Activated naive CD4-positive, alpha-beta T cell treated with anti-CD3 and anti-CD28 coated beads for 36 hours (primary cell): ENCODE measurements at regions of chr9 and their contacts with region 1.

Region 1: GRCh38 chr9:136482793-136483588 is at the start of gene SEC16A:
- DNase-seq: peak; percentile 100
- H3K4me3 Mint-ChIP-seq: peak within 1 kb of the TSS; percentile 99
- H3K27ac Mint-ChIP-seq: peak within 1 kb of the TSS; percentile 99
- H3K4me1 Mint-ChIP-seq: peaks cover 35% of the 10 kb centered on the region
- H3K27me3 Mint-ChIP-seq: no peaks in the 10 kb centered on the region
- total RNA-seq, gene SEC16A: 44.1 to 47.3 TPM

Region 2: GRCh38 chr9:135907431-135908092 is 575.4 kb before region 1 on chr9 and contains the start of gene CAMSAP1:
- CTCF ChIA-PET with region 1: no interaction called
- intact Hi-C with region 1: loop called (anchors 5 kb)
- DNase-seq: peak; percentile 94
- H3K4me3 Mint-ChIP-seq: peak within 1 kb of the TSS; percentile 80
- H3K27ac Mint-ChIP-seq: peak within 1 kb of the TSS; percentile 89
- H3K4me1 Mint-ChIP-seq: peaks cover 53% of the 10 kb centered on the region
- H3K27me3 Mint-ChIP-seq: no peaks in the 10 kb centered on the region
- total RNA-seq, gene CAMSAP1: 32.6 to 35.2 TPM

Region 3: DNA sequence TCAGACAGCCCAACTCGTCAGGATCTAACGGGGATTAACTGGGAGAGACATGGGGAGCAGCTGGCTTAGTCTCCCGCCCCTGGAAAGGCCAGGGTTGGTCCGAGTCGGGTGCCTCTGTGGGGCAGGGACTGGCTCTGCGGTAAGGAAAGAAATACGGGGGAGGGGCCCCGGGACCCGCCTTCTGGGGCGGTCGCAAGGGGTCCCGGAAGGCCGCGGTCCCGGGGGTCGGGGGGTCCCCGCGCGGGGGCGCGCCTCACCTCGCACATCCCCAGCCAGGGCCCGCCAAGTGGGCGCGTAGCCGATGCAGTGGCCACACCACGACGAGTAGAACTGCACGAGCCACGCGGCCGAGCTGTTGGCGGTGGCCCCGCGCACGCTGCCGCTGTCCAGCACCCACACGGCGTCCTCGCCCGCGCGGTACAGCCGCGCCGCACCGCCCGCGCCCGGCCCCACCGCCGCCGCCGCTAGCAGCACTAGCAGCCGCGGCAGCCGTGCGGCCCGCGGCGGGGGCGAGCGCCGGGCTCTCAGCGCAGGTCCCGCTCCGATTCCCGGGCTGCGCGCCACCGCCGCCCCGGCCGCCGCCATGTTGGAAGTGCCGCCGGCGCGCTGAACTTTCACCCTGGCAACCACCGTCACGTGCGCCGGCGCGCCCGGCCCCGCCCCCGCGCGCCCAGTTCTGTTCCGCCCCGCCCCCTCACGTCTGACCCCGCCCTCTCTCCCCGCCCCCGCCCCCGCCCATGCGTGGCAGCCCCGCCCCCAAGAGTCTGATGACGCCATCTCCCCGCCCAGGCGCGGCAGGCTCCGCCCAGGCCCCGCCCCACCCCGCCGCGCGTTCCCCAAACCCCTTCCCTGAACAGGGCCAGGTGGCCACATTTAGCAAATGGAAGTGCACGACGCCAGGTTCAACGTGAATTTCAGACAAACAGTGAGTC is 237.5 kb before region 1 on chr9 and contains the start of gene QSOX2:
- CTCF ChIA-PET with region 1: no interaction called
- intact Hi-C with region 1: loop called (anchors 1 kb)
- DNase-seq: peak; percentile 85
- H3K4me3 Mint-ChIP-seq: peak within 1 kb of the TSS; percentile 92
- H3K27ac Mint-ChIP-seq: peak within 1 kb of the TSS; percentile 88
- H3K4me1 Mint-ChIP-seq: peaks cover 35% of the 10 kb centered on the region
- H3K27me3 Mint-ChIP-seq: no peaks in the 10 kb centered on the region
- total RNA-seq, gene QSOX2: 17.7 to 18.0 TPM

Region 4: GRCh38 chr9:136443687-136444086 is 39.3 kb before region 1 on chr9:
- CTCF ChIA-PET with region 1: no interaction called
- intact Hi-C with region 1: no loop called
- DNase-seq: no peak
- H3K4me3 Mint-ChIP-seq: no peak overlapping the region
- H3K27ac Mint-ChIP-seq: no peak overlapping the region
- H3K4me1 Mint-ChIP-seq: peaks cover 4% of the 10 kb centered on the region
- H3K27me3 Mint-ChIP-seq: no peaks in the 10 kb centered on the region

Region 5: GRCh38 chr9:136539427-136540421 is 56.7 kb after region 1 on chr9:
- CTCF ChIA-PET with region 1: interaction called, 11 read pairs
- intact Hi-C with region 1: loop called (anchors 1 kb)
- DNase-seq: peak; percentile 99
- H3K4me3 Mint-ChIP-seq: peak overlapping the region; percentile 80
- H3K27ac Mint-ChIP-seq: peak overlapping the region; percentile 100
- H3K4me1 Mint-ChIP-seq: peaks cover 70% of the 10 kb centered on the region
- H3K27me3 Mint-ChIP-seq: no peaks in the 10 kb centered on the region

Region 6: DNA sequence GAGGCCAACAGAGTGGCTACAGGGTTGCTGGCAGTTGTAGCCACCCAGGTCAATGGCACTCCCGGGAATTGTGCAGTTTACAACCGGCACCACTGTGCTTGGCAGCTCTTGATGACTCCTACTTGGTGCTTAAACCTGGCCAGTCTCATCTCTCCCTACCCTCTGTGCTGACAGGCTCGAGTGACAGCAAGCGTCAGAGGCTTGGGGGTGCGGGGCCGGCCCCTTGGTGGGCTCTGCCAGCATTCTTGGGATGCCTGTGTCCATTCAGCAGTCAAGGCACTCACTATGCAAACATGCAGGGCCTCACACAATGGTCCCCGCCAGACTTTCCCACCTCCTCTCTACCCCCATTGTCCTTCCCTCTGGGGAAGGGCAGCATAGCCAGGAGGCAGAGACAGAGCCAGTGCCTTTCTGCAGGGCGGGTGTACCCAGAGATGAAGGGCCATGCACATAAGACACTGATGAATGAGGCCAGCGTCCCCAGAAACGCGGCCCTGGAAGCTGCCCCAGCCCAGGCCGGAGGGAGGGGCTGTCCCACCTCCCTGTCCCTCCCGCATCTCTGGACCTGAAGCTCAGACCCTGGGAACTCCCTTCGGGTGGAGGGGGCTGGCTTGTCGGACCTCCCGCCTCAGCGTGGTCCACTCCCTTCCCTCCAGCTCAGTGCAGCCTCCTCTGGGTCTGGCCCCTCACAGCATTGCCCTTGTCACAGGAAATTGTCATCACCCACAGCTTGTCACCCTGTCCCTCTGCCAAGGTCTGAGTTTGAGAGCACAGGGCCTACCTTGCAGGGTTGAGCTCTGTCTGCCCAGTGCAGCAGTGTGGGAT is 89.2 kb after region 1 on chr9:
- CTCF ChIA-PET with region 1: no interaction called
- intact Hi-C with region 1: no loop called
- DNase-seq: no peak
- H3K4me3 Mint-ChIP-seq: no peak overlapping the region
- H3K27ac Mint-ChIP-seq: no peak overlapping the region
- H3K4me1 Mint-ChIP-seq: no peaks in the 10 kb centered on the region
- H3K27me3 Mint-ChIP-seq: no peaks in the 10 kb centered on the region

Region 7: GRCh38 chr9:136644598-136645351 is 161.8 kb after region 1 on chr9:
- CTCF ChIA-PET with region 1: interaction called, 19 read pairs
- intact Hi-C with region 1: loop called (anchors 1 kb)
- DNase-seq: peak; percentile 72
- H3K4me3 Mint-ChIP-seq: no peak overlapping the region
- H3K27ac Mint-ChIP-seq: no peak overlapping the region
- H3K4me1 Mint-ChIP-seq: no peaks in the 10 kb centered on the region
- H3K27me3 Mint-ChIP-seq: peaks cover 15% of the 10 kb centered on the region

Region 8: GRCh38 chr9:136849038-136849959 is 366.3 kb after region 1 on chr9 and contains the start of gene PHPT1:
- CTCF ChIA-PET with region 1: no interaction called
- intact Hi-C with region 1: loop called (anchors 1 kb)
- DNase-seq: peak; percentile 99
- H3K4me3 Mint-ChIP-seq: peak within 1 kb of the TSS; percentile 93
- H3K27ac Mint-ChIP-seq: peak within 1 kb of the TSS; percentile 95
- H3K4me1 Mint-ChIP-seq: peaks cover 14% of the 10 kb centered on the region
- H3K27me3 Mint-ChIP-seq: peaks cover 18% of the 10 kb centered on the region
- total RNA-seq, gene PHPT1: 110 to 116 TPM

Region 9: GRCh38 chr9:137694967-137695879 is 1212.2 kb after region 1 on chr9:
- CTCF ChIA-PET with region 1: no interaction called
- intact Hi-C with region 1: no loop called
- DNase-seq: peak; percentile 20
- H3K4me3 Mint-ChIP-seq: no peak overlapping the region
- H3K27ac Mint-ChIP-seq: no peak overlapping the region
- H3K4me1 Mint-ChIP-seq: peaks cover 45% of the 10 kb centered on the region
- H3K27me3 Mint-ChIP-seq: no peaks in the 10 kb centered on the region